Activated CD4-positive, alpha-beta memory T cell treated with anti-CD3 and anti-CD28 coated beads, Interleukin-2, amount 10 ng/mL, durations not matched to agents 7 days and 5 days (primary cell): ENCODE measurements at regions of chr18 and their contacts with region 1.

Region 1: DNA sequence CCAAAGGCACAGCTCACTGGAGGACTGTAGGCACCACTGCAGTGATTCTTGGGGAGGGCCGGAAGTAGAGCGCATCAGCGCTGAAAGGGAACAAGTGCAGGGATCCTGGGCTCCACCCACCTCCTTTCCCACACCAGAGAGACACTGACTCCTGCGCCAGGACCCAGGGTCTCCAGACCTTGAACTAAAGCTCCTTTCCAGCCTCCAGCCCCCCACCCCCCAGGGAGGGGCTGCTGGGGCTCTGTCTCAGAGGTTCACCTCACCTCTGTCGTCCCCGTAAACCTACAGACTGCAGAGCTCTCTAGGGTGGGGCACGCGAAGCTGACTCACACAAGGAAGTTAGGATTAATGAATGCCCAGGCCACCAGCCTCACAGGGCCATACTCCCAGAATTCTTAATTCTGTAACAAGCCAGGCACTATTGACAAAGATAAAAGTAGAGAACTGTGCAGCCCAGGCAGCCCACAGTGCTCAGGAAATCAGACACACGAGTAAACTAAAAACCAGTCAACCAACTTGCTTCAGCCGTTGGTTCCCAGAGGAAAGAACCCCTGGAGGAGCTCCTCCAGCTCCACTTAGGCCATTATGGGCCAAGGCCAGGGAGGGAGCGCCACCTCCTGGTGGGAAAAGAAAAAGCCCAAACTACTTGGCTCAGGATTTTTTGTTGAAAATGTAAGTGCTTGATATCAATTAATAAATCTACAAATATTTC is 45.1 kb upstream of the ACAA2 start:
- DNase-seq: peak; percentile 65
- H3K4me3 Mint-ChIP-seq: no peak overlapping the region
- H3K27ac Mint-ChIP-seq: no peak overlapping the region
- H3K4me1 Mint-ChIP-seq: no peaks in the 10 kb centered on the region
- H3K27me3 Mint-ChIP-seq: no peaks in the 10 kb centered on the region

Region 2: GRCh38 chr18:49322765-49323490 is 535.5 kb before region 1 on chr18:
- CTCF ChIA-PET with region 1: no interaction called
- POLR2A ChIA-PET with region 1: no interaction called
- DNase-seq: no peak
- H3K4me3 Mint-ChIP-seq: no peak overlapping the region
- H3K27ac Mint-ChIP-seq: no peak overlapping the region
- H3K4me1 Mint-ChIP-seq: peaks cover 2% of the 10 kb centered on the region
- H3K27me3 Mint-ChIP-seq: no peaks in the 10 kb centered on the region

Region 3: DNA sequence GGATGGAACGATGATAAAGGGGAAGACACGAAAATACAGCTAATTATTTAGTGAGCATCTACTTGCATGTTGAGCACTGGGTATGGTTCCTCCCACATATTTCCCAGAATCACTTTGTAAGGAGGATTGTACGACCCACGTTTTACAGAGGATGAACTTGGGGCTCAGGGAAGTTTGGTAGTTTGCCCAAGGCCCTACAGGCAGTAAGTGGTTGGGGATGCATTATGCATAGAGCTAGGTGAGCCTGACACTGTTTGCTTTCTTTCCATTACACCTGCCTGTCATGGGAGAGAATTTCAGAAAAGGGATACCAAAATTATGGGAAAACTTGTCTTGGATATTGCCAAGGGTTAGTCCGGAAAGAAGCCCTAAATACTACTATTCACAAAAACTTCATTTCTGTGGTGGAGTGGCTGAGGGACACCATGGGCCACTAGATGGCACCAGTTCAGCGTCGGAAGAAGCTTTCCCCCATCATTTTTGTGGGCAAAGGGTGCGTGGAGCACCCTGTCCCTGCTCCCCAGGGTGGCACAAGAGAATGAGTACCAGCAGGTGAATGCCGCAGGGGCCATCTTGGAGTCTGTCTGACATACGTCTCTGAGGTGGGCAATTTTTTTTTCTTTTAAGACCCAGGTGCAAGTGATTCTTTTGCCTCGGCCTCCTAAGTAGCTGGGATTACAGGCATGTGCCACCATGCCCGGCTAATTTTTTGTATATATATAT is 347.9 kb before region 1 on chr18:
- CTCF ChIA-PET with region 1: interaction called, 61 read pairs
- POLR2A ChIA-PET with region 1: no interaction called
- DNase-seq: peak; percentile 53
- H3K4me3 Mint-ChIP-seq: no peak overlapping the region
- H3K27ac Mint-ChIP-seq: no peak overlapping the region
- H3K4me1 Mint-ChIP-seq: no peaks in the 10 kb centered on the region
- H3K27me3 Mint-ChIP-seq: peaks cover 16% of the 10 kb centered on the region

Region 4: GRCh38 chr18:49561289-49562193 is 296.9 kb before region 1 on chr18 and contains the start of gene LIPG:
- CTCF ChIA-PET with region 1: interaction called, 14 read pairs
- POLR2A ChIA-PET with region 1: no interaction called
- DNase-seq: peak; percentile 54
- H3K4me3 Mint-ChIP-seq: peak within 1 kb of the TSS; percentile 35
- H3K27ac Mint-ChIP-seq: no peak within 1 kb of the TSS
- H3K4me1 Mint-ChIP-seq: peaks cover 29% of the 10 kb centered on the region
- H3K27me3 Mint-ChIP-seq: peaks cover 76% of the 10 kb centered on the region
- total RNA-seq, gene LIPG: not detected

Region 5: GRCh38 chr18:49813319-49814146 is 44.9 kb before region 1 on chr18 and contains the start of gene ACAA2:
- CTCF ChIA-PET with region 1: interaction called, 5 read pairs
- POLR2A ChIA-PET with region 1: interaction called, 12 read pairs
- DNase-seq: peak; percentile 87
- H3K4me3 Mint-ChIP-seq: peak within 1 kb of the TSS; percentile 97
- H3K27ac Mint-ChIP-seq: peak within 1 kb of the TSS; percentile 98
- H3K4me1 Mint-ChIP-seq: peaks cover 56% of the 10 kb centered on the region
- H3K27me3 Mint-ChIP-seq: no peaks in the 10 kb centered on the region
- total RNA-seq, gene ACAA2: 86.8 to 93.1 TPM

Region 6: DNA sequence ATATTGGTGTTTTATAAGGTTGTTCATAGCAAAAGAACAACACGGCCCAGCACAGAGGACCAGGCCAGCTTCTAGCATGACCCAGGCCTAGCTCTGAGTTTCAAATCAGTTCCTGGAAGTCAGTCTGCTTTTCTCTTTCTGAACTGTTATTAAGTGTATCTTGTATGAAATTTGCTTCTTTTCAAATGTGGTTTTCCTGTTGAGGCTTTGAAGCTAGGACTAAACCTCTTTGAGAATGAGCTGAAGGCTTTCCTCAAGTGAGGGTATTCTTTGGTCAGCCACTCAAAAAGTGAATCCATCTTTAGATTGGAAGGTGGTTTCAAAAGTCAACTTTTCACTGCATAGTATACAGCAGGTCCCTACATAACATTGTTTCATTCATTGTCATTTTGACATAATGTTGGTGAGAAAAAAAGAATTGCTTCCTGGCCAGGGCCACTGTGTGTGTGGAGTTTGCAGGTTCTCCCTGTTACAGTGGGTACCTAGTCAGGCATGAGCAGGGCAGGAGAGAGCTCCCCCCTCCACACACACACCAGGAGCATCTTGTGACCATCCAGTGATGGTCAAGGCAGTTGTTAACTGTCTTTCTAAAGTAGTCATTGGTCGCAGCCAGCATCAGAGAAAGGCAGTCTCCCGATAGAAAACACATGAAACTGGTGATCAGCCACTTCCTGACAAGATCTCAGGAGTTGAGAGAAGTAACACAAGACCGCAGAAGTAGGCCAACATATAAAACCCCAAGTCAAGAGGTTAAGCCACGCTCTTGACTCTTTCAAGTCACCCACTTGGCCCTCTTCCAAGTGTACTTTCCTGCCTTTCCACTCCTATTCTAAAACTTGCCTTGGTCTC is 38.4 kb before region 1 on chr18:
- CTCF ChIA-PET with region 1: interaction called, 20 read pairs
- POLR2A ChIA-PET with region 1: interaction called, 6 read pairs
- DNase-seq: peak; percentile 60
- H3K4me3 Mint-ChIP-seq: peak overlapping the region; percentile 60
- H3K27ac Mint-ChIP-seq: peak overlapping the region; percentile 93
- H3K4me1 Mint-ChIP-seq: peaks cover 66% of the 10 kb centered on the region
- H3K27me3 Mint-ChIP-seq: no peaks in the 10 kb centered on the region